ENCODE measurements at regions of chr1 and their contacts with region 1.

Region 1: DNA sequence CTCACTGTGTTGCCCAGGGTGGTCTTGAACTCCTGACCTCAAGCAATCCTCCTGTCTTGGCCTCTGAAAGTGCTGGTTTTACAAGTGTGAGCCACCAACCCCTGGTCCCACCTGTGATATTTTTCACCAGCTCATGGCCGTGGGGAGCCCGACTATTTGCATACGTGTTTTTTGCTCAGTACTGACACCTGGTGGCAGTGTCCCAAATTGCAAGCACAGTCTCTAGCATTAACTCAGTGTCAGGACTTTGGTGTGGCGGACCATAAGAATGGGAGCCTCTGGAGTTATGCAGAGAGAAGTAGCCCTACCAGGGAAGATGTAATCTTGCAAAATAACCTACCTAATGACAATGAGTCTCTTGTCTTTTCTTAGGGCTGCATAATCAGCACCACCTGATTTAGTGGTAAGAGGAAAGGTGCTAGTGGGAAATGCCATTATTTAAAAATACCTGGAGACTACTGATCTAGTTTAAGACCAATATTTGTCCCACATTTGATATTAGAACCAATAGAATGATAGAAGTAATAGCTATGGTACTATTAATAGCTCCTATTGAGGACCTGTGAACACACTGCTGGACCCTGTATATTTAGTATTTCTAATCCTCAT is 305.4 kb downstream of the DISC1 start:
- DNase-seq: no peak
- H3K4me3 ChIP-seq: no peak overlapping the region
- H3K27ac ChIP-seq: no peak overlapping the region
- H3K4me1 ChIP-seq: peaks cover 20% of the 10 kb centered on the region
- H3K27me3 ChIP-seq: no peaks in the 10 kb centered on the region
- CTCF ChIP-seq: peak; percentile 42 to 53
- POLR2A ChIP-seq: no peak

Region 2: GRCh38 chr1:231885209-231885854 is 46.6 kb before region 1 on chr1:
- CTCF ChIA-PET with region 1: no interaction called
- POLR2A ChIA-PET with region 1: no interaction called
- dilution Hi-C with region 1: no loop called
- intact Hi-C with region 1: loop called (anchors 2 kb)
- DNase-seq: peak; percentile 73
- H3K4me3 ChIP-seq: no peak overlapping the region
- H3K27ac ChIP-seq: peak overlapping the region; percentile 13
- H3K4me1 ChIP-seq: peaks cover 17% of the 10 kb centered on the region
- H3K27me3 ChIP-seq: no peaks in the 10 kb centered on the region
- CTCF ChIP-seq: no peak
- POLR2A ChIP-seq: no peak

Region 3: GRCh38 chr1:232012773-232013386 is 80.9 kb after region 1 on chr1:
- CTCF ChIA-PET with region 1: no interaction called
- POLR2A ChIA-PET with region 1: no interaction called
- dilution Hi-C with region 1: no loop called
- intact Hi-C with region 1: no loop called
- DNase-seq: peak; percentile 97
- H3K4me3 ChIP-seq: peak overlapping the region in 1 of 3 experiments; percentile 14
- H3K27ac ChIP-seq: peak overlapping the region; percentile 80
- H3K4me1 ChIP-seq: peaks cover 27% of the 10 kb centered on the region
- H3K27me3 ChIP-seq: no peaks in the 10 kb centered on the region
- CTCF ChIP-seq: no peak
- POLR2A ChIP-seq: no peak

Region 4: DNA sequence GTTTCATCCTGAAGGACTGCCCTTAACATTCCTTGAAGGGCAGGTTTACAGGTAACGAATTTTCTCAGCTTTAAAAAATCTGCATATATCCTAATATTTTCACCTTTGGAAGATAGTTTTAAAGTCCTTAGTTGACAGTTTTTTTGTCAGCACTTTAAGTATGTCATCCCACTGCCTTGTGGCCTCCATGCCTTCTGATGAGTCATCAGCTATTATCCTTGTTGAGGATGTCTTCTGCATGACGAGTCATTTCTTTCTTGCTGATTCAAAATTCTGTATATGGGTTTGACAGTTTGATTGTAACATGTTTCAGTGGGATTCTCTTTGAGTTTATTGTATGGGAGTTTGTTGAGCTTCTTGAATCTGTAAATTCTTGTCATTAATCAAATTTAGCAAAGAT is 195.2 kb after region 1 on chr1:
- CTCF ChIA-PET with region 1: no interaction called
- POLR2A ChIA-PET with region 1: no interaction called
- dilution Hi-C with region 1: no loop called
- intact Hi-C with region 1: no loop called
- DNase-seq: no peak
- H3K4me3 ChIP-seq: no peak overlapping the region
- H3K27ac ChIP-seq: no peak overlapping the region
- H3K4me1 ChIP-seq: peaks cover 8% of the 10 kb centered on the region
- H3K27me3 ChIP-seq: no peaks in the 10 kb centered on the region
- CTCF ChIP-seq: no peak
- POLR2A ChIP-seq: no peak

Measured in endothelial cell of umbilical vein (primary cell).